Activated CD4-positive, alpha-beta T cell treated with anti-CD3 and anti-CD28 coated beads for 36 hours (primary cell): ENCODE measurements at regions of chr4 and their contacts with region 1.

Region 1: GRCh38 chr4:80540785-80541469 is 205.4 kb downstream of the CFAP299 start:
- DNase-seq: no peak
- ATAC-seq: peak; percentile 79
- H3K4me3 Mint-ChIP-seq: no peak overlapping the region
- H3K27ac Mint-ChIP-seq: peak overlapping the region; percentile 64
- H3K4me1 Mint-ChIP-seq: peaks cover 25% of the 10 kb centered on the region
- H3K27me3 Mint-ChIP-seq: peaks cover 43% of the 10 kb centered on the region

Region 2: DNA sequence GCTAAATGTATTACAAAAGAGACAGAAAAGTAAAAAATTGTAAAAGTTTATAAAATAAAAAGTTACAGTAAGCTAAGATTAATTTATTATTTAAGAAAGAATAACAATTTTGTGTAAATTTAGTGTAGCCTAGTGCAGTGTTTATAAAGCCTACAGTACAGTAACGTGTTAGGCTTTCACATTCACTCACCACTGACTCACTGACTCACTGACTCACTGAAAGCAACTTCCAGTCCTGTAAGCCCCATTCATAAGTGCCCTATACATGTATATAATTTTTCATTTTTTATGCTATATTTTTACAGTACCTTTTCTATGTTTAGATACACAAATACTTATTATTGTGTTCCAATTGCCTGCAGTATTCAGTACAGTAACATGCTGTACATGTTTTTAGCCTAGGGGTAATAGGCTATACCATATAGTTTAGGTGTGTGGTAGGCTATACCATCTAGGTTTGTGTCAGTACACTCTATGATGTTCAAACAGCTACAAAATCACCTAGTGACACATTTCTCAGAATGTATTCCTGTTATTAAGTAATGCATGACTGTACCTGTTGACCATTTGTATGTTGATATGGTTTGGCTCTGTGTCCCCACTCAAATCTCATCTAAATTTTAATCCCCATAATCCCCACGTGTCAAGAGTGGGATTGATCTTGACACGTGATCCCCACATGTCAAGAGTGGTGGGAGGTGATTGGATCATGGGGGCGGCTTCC is 147.5 kb before region 1 on chr4:
- CTCF ChIA-PET with region 1: no interaction called
- POLR2A ChIA-PET with region 1: no interaction called
- intact Hi-C with region 1: loop called in 1 of 2 experiments (anchors 2 kb)
- DNase-seq: peak; percentile 51
- ATAC-seq: peak; percentile 98
- H3K4me3 Mint-ChIP-seq: no peak overlapping the region
- H3K27ac Mint-ChIP-seq: no peak overlapping the region
- H3K4me1 Mint-ChIP-seq: peaks cover 6% of the 10 kb centered on the region
- H3K27me3 Mint-ChIP-seq: no peaks in the 10 kb centered on the region

Region 3: GRCh38 chr4:80500613-80501012 is 40.3 kb before region 1 on chr4:
- CTCF ChIA-PET with region 1: no interaction called
- POLR2A ChIA-PET with region 1: no interaction called
- intact Hi-C with region 1: no loop called
- DNase-seq: peak; percentile 12
- ATAC-seq: peak; percentile 75
- H3K4me3 Mint-ChIP-seq: no peak overlapping the region
- H3K27ac Mint-ChIP-seq: peak overlapping the region; percentile 63
- H3K4me1 Mint-ChIP-seq: peaks cover 39% of the 10 kb centered on the region
- H3K27me3 Mint-ChIP-seq: no peaks in the 10 kb centered on the region